HCT116 (cell line): ENCODE measurements at regions of chr9 and their contacts with region 1.

Region 1: DNA sequence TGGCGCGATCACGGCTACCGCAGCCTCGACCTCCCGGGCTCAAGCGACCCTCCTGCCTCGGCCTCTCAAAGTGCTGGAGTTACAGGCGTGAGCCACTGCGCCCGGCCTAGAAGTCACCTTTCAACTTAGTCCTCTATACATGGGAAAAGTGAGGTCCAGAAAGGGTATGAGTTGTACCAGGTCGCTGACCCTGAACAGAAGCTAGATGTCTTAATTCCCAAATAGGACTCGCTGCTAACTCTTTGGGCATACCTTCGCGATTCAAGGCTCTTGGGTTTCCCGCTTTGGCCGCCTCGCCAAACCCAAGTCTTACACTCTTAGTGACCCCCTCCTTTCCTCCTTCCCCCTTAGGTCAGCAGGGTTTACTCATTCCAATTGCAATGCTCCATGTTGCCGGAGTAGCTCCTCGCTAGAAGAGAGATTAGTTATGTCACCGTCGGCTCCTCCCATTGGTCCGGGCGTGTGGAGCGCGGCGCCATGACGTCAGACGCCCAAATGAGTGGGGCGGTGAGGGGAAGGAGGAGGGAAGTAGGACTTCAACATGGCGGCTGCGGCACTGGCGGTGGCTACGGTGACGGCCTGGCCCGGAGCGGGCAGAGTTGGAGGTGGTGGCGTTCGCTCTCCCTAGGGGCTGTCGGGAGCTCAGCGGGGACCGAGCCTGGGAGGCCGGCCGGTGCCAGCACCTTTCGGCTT is at the start of gene UBAP1:
- DNase-seq: peak; percentile 93
- ATAC-seq: peak; percentile 94
- H3K4me3 ChIP-seq: peak within 1 kb of the TSS; percentile 79 to 98
- H3K27ac ChIP-seq: peak within 1 kb of the TSS; percentile 62
- H3K4me1 ChIP-seq: peaks cover 11 to 36% of the 10 kb centered on the region in 2 experiments
- H3K27me3 ChIP-seq: no peaks in the 10 kb centered on the region
- CTCF ChIP-seq: no peak
- POLR2A ChIP-seq: peak; percentile 87
- RAD21 ChIP-seq: no peak
- total RNA-seq, gene UBAP1: 30.8 TPM

Region 2: DNA sequence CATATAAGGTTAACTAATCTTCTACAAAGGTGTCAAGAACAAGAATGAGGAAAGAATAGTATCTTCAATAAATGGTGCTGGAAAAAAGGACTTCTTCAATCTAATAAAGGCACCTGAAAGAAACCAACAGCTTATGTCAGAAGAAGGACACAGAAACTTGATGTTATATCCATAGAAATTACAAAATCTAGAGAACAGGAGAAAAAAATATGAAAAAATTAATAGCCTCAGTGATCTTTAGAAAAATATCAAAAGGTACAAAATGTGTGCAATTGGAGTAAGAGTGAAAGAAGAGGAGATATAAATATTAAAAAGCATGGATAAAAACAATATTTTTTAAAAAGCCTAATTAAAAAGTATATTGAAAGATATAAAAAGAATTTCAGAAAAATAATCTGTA is 402.1 kb before region 1 on chr9:
- CTCF ChIA-PET with region 1: no interaction called
- POLR2A ChIA-PET with region 1: no interaction called
- RAD21 ChIA-PET with region 1: no interaction called
- intact Hi-C with region 1: no loop called
- DNase-seq: no peak
- ATAC-seq: no peak
- H3K4me3 ChIP-seq: no peak overlapping the region
- H3K27ac ChIP-seq: no peak overlapping the region
- H3K4me1 ChIP-seq: peaks cover 4 to 46% of the 10 kb centered on the region in 2 experiments; a peak in 3 of 4 replicates
- H3K27me3 ChIP-seq: no peaks in the 10 kb centered on the region
- CTCF ChIP-seq: no peak
- POLR2A ChIP-seq: no peak
- RAD21 ChIP-seq: no peak

Region 3: DNA sequence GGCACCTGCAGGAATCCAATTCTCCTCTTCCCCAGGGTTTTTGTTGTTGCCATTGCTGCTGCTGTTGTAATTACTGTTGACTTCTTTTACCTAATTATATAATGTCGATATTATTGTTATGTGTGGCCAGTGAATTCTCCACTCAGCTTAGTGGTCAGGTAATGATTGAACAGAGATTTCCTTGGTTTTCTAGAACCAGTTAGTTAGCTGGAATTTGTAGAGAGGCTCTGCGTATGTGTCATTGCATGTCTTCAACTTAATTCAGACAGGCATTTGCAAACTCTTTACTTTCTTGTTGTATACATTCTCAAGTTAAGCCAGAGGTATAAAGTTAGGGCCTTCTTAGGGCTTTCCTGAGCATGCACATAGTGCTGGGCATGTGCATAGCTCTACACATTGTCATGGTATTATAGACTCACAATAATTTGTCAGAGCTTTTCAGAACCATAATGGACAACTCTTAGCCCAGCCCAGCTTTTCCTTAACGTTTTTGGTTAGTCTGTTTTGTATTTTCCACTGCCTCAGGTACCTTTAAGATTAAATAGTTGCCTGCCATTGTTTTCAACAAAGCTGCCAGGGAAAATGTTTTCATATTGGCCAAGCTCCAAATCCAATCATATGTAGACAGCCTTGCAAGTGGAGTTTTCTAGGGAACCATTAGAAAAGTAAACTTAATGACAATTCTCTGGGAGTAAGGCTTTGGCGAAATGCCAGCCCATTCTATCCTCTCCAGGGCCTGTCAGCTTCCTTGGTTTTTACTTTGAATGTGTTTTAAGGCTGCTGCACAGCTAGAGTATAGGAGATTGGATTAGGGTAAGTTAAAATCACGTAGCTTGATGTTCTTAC is 293.6 kb before region 1 on chr9:
- CTCF ChIA-PET with region 1: no interaction called
- POLR2A ChIA-PET with region 1: no interaction called
- RAD21 ChIA-PET with region 1: no interaction called
- intact Hi-C with region 1: no loop called
- DNase-seq: no peak
- ATAC-seq: no peak
- H3K4me3 ChIP-seq: no peak overlapping the region
- H3K27ac ChIP-seq: no peak overlapping the region
- H3K4me1 ChIP-seq: peaks cover 0 to 14% of the 10 kb centered on the region in 2 experiments; a peak in 2 of 4 replicates
- H3K27me3 ChIP-seq: no peaks in the 10 kb centered on the region
- CTCF ChIP-seq: no peak
- POLR2A ChIP-seq: no peak
- RAD21 ChIP-seq: no peak

Region 4: DNA sequence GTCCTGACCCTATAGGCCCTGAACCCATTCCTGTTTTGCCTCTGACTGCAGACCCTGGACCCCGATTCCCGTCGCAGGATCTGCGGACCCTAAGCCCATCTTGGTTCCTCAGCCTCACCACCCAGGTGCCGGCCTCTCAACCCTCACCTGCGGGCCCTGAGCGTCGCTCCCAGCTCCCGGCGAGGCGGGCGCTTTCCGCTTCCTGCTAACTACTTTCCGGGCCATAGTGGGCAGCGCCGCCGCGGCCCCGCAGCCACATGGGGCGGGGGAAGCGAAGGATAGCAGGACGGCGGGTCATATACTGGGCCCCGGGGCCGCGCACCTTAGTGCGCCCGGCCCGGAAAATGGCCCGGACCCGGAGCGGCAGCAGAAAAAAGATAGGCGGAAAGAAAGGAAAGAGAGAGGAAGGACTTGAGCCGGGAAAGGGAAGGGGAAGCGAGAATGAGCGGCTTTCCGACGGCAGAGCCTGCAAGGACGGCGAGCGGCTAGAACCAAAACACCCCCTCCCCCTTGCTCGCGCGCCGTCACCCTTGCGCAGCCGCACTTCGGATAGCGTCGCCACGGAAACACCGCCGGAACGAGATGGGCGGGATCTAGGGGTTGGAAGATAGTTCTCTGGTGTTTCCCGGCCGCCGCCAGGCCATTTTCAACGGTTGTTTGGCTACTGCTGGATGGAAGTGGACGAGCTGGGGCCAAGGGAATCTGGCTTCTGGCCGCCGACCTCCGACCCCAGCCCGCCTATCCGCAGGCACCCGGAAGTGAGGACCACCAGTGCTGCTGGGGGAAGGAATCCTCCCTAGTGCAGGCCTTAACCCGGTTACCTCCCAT is 52.2 kb before region 1 on chr9 and contains the start of gene DCAF12:
- CTCF ChIA-PET with region 1: no interaction called
- POLR2A ChIA-PET with region 1: no interaction called
- RAD21 ChIA-PET with region 1: no interaction called
- intact Hi-C with region 1: loop called (anchors 2 kb)
- DNase-seq: peak; percentile 78
- ATAC-seq: peak; percentile 93
- H3K4me3 ChIP-seq: peak within 1 kb of the TSS; percentile 63 to 85
- H3K27ac ChIP-seq: peak within 1 kb of the TSS; percentile 86
- H3K4me1 ChIP-seq: peaks cover 10 to 12% of the 10 kb centered on the region in 2 experiments
- H3K27me3 ChIP-seq: no peaks in the 10 kb centered on the region
- CTCF ChIP-seq: no peak
- POLR2A ChIP-seq: peak; percentile 14
- RAD21 ChIP-seq: no peak; the same call in 1 of the 2 replicates
- total RNA-seq, gene DCAF12: 40.2 TPM